ENCODE measurements at regions of chr2 and their contacts with region 1.

Region 1: GRCh38 chr2:8872821-8873432 is 35.5 kb upstream of the KIDINS220 start:
- DNase-seq: no peak
- H3K4me3 ChIP-seq: no peak overlapping the region
- H3K27ac ChIP-seq: no peak overlapping the region
- H3K4me1 ChIP-seq: no peaks in the 10 kb centered on the region
- H3K27me3 ChIP-seq: no peaks in the 10 kb centered on the region
- CTCF ChIP-seq: peak in 2 of 3 experiments; percentile 59 to 61; a peak in 3 of 4 replicates
- EP300 ChIP-seq: no peak
- POLR2A ChIP-seq: no peak
- RAD21 ChIP-seq: peak; percentile 64 to 70

Region 2: GRCh38 chr2:8862230-8862629 is 10.7 kb before region 1 on chr2:
- CTCF ChIA-PET with region 1: interaction called, 20 read pairs
- POLR2A ChIA-PET with region 1: no interaction called
- DNase-seq: no peak
- H3K4me3 ChIP-seq: no peak overlapping the region
- H3K27ac ChIP-seq: no peak overlapping the region
- H3K4me1 ChIP-seq: no peaks in the 10 kb centered on the region
- H3K27me3 ChIP-seq: no peaks in the 10 kb centered on the region
- CTCF ChIP-seq: no peak
- EP300 ChIP-seq: no peak
- POLR2A ChIP-seq: no peak
- RAD21 ChIP-seq: no peak

Region 3: DNA sequence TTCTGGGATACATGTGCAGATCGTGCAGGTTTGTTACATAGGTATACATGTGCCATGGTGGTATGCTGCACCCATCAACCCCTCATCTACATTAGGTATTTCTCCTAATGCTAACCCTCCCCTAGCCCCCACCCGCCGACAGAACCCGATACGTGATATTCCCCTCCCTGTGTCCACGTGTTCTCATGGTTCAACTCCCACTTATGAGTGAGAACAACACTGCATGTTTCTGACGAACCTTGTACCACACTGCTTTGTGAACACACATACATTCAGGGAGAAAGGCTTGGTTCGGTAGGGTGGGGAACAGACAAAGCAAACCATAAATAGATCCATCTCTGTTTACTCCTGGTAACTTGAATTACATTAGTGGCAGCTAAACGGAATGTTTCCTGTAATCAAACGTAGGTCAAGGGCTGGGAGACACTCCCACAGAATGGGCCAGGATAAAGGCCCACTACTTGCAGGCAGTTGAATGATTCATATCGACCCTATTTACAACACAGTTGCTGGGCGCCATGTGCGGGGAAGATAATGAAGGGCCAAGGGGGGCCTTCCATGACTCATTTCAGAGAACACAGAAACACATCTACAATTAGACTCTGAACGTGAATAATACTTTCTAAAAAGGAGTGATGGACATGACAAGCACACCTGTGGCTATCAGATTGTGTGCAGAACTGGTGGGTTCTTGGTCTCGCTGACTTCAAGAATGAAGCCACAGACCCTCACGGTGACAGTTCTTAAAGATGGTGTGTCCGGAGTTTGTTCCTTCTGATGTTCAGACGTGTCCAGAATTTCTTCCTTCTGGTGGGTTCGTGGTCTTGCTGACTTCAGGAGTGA is 21.3 kb after region 1 on chr2:
- CTCF ChIA-PET with region 1: interaction called, 16 read pairs
- POLR2A ChIA-PET with region 1: no interaction called
- DNase-seq: no peak
- H3K4me3 ChIP-seq: no peak overlapping the region
- H3K27ac ChIP-seq: no peak overlapping the region
- H3K4me1 ChIP-seq: peaks cover 0 to 8% (median 4%) of the 10 kb centered on the region in 4 experiments; a peak in 3 of 7 replicates
- H3K27me3 ChIP-seq: no peaks in the 10 kb centered on the region
- CTCF ChIP-seq: no peak
- EP300 ChIP-seq: no peak
- POLR2A ChIP-seq: no peak
- RAD21 ChIP-seq: no peak

Region 4: DNA sequence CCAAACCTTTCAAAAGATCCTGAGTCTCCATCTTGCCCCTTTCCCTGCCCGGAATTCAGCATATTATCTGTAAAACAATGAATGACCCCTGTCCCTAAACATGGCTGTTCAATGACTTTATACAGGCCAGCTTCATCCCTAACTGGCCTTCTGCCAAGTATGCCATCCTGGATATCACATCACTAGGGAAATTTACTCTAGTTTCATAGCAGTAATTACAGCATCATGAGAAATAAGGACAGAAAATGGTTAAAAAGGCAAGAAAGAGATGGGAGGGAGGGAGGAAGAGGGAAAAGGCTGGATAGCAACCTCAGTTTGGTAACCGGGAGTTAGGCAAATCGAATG is 126.1 kb after region 1 on chr2:
- CTCF ChIA-PET with region 1: no interaction called
- POLR2A ChIA-PET with region 1: no interaction called
- DNase-seq: no peak
- H3K4me3 ChIP-seq: no peak overlapping the region
- H3K27ac ChIP-seq: no peak overlapping the region
- H3K4me1 ChIP-seq: peaks cover 3 to 7% (median 6%) of the 10 kb centered on the region in 4 experiments
- H3K27me3 ChIP-seq: no peaks in the 10 kb centered on the region
- CTCF ChIP-seq: no peak
- EP300 ChIP-seq: no peak
- POLR2A ChIP-seq: no peak
- RAD21 ChIP-seq: no peak

Region 5: DNA sequence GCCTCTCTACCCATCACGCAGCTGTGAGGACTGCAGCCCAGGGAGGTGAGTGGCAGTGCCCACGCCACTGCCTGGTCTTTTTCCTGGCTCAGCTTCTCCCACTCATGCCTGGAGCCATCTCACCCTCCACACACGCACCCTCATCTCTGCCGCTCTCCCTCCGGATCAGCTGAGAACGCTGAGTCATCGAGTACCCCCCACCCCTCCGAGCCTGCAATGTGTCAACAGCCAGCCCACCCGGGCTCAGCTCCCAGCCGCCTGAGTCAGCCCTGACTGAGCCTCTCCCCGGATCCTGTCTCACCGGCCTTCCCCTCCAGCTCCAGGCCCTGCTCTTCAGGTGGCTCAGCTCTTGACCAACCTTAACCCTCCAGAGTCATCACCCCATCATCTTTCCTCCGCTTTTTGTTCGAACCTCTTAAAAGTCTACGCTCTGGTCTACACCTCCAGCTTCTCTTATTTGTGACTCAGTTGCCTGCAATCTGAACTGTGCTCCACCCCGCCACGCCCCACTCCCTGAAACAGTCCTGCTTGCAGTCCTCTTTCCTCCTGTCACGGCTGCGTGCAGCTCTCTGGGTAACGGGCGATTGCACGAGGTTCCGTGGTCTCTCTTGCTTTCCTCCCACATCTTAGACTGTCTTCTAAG is 239.3 kb after region 1 on chr2:
- CTCF ChIA-PET with region 1: interaction called, 15 read pairs
- POLR2A ChIA-PET with region 1: no interaction called
- DNase-seq: no peak
- H3K4me3 ChIP-seq: no peak overlapping the region
- H3K27ac ChIP-seq: no peak overlapping the region
- H3K4me1 ChIP-seq: peaks cover 0 to 5% (median under 1%) of the 10 kb centered on the region in 4 experiments; a peak in 2 of 7 replicates
- H3K27me3 ChIP-seq: no peaks in the 10 kb centered on the region; a peak in 1 of 7 replicates
- CTCF ChIP-seq: no peak
- EP300 ChIP-seq: no peak
- POLR2A ChIP-seq: no peak
- RAD21 ChIP-seq: no peak

Measured in H1 (cell line).